ENCODE measurements at regions of chr2 and their contacts with region 1.

Region 1: GRCh38 chr2:96957244-96957643 is 29.1 kb downstream of the FAM178B start:
- DNase-seq: no peak
- H3K4me3 ChIP-seq: no peak overlapping the region
- H3K27ac ChIP-seq: no peak overlapping the region
- H3K4me1 ChIP-seq: peaks cover 17 to 42% (median 33%) of the 10 kb centered on the region in 4 donors
- H3K27me3 ChIP-seq: no peaks in the 10 kb centered on the region
- CTCF ChIP-seq: no peak
- EP300 ChIP-seq: no peak
- POLR2A ChIP-seq: no peak

Region 2: GRCh38 chr2:96860065-96861043 is 96.9 kb before region 1 on chr2:
- intact Hi-C with region 1: loop called (anchors 5 kb)
- DNase-seq: peak in 1 of 2 donors; percentile 37
- H3K4me3 ChIP-seq: no peak overlapping the region
- H3K27ac ChIP-seq: peak overlapping the region in 4 of 5 donors; percentile 87 to 90 (median 88)
- H3K4me1 ChIP-seq: peaks cover 37 to 89% (median 52%) of the 10 kb centered on the region in 4 donors
- H3K27me3 ChIP-seq: no peaks in the 10 kb centered on the region
- CTCF ChIP-seq: no peak
- EP300 ChIP-seq: no peak
- POLR2A ChIP-seq: no peak

Measured in stomach (tissue), 19 donors.